Dorsolateral prefrontal cortex (tissue), 120 donors: ENCODE measurements at regions of chr1 and their contacts with region 1.

Region 1: GRCh38 chr1:243946946-243947345 is 96.9 kb upstream of the AKT3 start:
- DNase-seq: no peak
- H3K4me3 ChIP-seq: no peak overlapping the region
- H3K27ac ChIP-seq: no peak overlapping the region
- H3K27me3 ChIP-seq: no peaks in the 10 kb centered on the region
- CTCF ChIP-seq: peak in 55 of 56 donors; percentile 7 to 65 (median 44)

Region 2: DNA sequence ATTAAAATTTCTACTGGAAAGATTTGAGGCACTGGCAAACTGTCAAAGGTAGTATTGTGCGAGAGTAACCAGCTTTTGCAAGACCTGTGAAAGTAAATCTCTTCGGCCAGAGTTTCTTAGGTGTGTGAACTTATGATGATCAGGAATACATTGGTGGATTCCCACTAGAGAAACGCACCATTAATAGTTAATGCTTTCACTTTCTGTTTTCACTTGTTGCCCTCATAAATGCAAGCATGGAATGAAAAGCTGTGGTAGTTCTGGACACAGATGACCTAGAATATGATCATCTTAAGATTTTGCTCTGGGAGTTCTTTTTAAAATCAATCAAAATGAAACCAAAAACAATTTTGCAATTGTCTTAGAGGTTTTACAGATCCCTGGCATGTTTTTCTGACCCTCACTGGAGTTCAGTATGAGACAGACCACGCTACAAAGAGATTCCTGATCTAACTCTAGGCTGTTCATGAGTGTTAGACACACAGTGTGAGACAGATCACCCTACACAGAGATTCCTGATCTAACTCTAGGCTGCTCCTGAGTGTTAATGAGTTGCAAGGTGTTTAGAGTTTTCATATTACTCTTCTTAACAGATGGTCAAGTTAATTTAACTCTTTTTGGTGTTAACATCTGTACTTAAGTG is 592.3 kb before region 1 on chr1:
- intact Hi-C with region 1: loop called in 1 of 2 experiments (anchors 10 kb)
- DNase-seq: no peak
- H3K4me3 ChIP-seq: peak overlapping the region in 53 of 59 donors; percentile 11 to 58 (median 36)
- H3K27ac ChIP-seq: peak overlapping the region in 28 of 59 donors; percentile 1 to 57 (median 20)
- H3K27me3 ChIP-seq: no peaks in the 10 kb centered on the region
- CTCF ChIP-seq: no peak

Region 3: GRCh38 chr1:243482141-243483022 is 464.6 kb before region 1 on chr1:
- intact Hi-C with region 1: loop called in 1 of 2 experiments (anchors 2 kb)
- DNase-seq: peak in 4 of 10 donors; percentile 50 to 81 (median 70)
- H3K4me3 ChIP-seq: peak overlapping the region; percentile 41 to 77 (median 62)
- H3K27ac ChIP-seq: peak overlapping the region in 58 of 59 donors; percentile 39 to 94 (median 81)
- H3K27me3 ChIP-seq: no peaks in the 10 kb centered on the region
- CTCF ChIP-seq: no peak

Region 4: GRCh38 chr1:244171241-244171985 is 224.5 kb after region 1 on chr1:
- intact Hi-C with region 1: no loop called
- DNase-seq: peak in 9 of 10 donors; percentile 49 to 89 (median 66)
- H3K4me3 ChIP-seq: no peak overlapping the region
- H3K27ac ChIP-seq: peak overlapping the region in 26 of 59 donors; percentile 3 to 90 (median 34)
- H3K27me3 ChIP-seq: no peaks in the 10 kb centered on the region
- CTCF ChIP-seq: no peak